Stomach (tissue), 19 donors: ENCODE measurements at regions of chr14 and their contacts with region 1.

Region 1: DNA sequence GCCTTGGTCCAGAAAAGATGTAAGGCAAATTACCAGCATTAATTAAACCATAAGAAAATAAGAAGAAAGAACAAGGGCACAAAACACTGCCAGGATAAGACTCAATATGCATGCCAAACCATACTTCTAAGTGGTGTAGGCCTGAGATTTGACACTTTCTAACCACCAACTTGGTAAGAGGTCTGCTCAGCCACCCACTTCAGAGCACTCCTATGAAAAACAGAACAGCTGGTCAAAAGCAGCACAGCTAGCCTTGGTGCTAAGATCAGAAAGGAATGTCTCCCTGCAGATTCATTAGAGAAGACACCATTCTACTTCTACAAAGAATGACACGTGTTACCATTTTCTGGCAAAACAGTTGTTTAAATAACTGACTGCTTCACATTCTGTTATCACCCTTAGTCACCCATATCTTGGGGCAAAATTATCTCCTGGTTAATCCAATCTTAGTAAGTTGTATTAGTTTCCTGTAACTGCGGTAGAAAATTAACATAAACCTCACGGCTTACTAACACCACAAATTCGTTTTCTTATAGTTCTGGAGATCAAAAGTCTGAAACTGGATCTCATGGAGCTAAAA is 13.2 kb downstream of the RPS6KA5 start:
- DNase-seq: no peak
- H3K4me3 ChIP-seq: no peak overlapping the region
- H3K27ac ChIP-seq: no peak overlapping the region
- H3K4me1 ChIP-seq: peaks cover 0 to 38% (median 15%) of the 10 kb centered on the region in 4 donors
- H3K27me3 ChIP-seq: no peaks in the 10 kb centered on the region
- CTCF ChIP-seq: no peak
- EP300 ChIP-seq: no peak
- POLR2A ChIP-seq: no peak

Region 2: GRCh38 chr14:90911121-90911520 is 136.1 kb before region 1 on chr14:
- intact Hi-C with region 1: loop called (anchors 10 kb)
- DNase-seq: peak in 1 of 2 donors; percentile 7
- H3K4me3 ChIP-seq: no peak overlapping the region
- H3K27ac ChIP-seq: no peak overlapping the region
- H3K4me1 ChIP-seq: no peaks in the 10 kb centered on the region
- H3K27me3 ChIP-seq: no peaks in the 10 kb centered on the region
- CTCF ChIP-seq: no peak
- EP300 ChIP-seq: no peak
- POLR2A ChIP-seq: no peak

Region 3: GRCh38 chr14:91089958-91090535 is 42.8 kb after region 1 on chr14:
- intact Hi-C with region 1: no loop called
- DNase-seq: no peak
- H3K4me3 ChIP-seq: no peak overlapping the region
- H3K27ac ChIP-seq: no peak overlapping the region
- H3K4me1 ChIP-seq: peaks cover 10 to 32% (median 25%) of the 10 kb centered on the region in 4 donors
- H3K27me3 ChIP-seq: no peaks in the 10 kb centered on the region
- CTCF ChIP-seq: no peak
- EP300 ChIP-seq: no peak
- POLR2A ChIP-seq: no peak